ENCODE measurements at regions of chr14 and their contacts with region 1.

Region 1: DNA sequence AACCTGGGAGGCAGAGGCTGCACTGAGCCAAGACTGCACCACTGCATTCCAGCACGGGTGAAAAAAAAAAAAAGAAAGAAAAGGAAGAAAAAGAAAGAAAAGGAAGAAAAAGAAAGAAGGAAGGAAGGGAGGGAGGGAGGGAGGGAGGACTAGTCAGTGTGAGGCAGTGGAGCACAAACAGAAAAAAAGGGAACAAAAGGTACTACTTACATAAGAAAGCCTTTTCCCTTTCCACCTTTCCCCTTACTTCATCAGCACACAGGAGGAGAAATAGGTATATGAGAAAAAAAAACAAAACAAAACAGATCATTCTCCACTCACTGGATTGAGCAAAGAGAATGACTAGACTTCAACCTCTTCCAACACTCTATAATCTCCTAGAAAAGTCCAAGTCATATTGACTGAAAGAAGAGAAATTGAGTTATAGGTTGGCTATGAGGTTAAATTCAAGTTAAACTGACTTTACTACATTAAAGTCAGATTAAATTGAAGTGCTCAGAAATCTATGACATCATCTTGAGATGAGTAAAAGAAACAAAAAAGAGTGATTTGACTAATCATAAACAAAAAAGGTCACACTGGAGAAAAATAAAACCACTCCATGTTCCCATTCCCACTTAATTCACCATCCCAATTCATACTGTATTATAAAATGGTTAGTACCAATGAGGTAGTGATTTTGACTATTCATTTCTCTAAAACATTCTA is 43.6 kb downstream of the NOVA1 start:
- DNase-seq: no peak
- H3K4me3 ChIP-seq: no peak overlapping the region
- H3K27ac ChIP-seq: no peak overlapping the region
- H3K4me1 ChIP-seq: no peaks in the 10 kb centered on the region
- H3K27me3 ChIP-seq: no peaks in the 10 kb centered on the region
- CTCF ChIP-seq: no peak

Region 2: GRCh38 chr14:26500028-26500427 is 54.2 kb before region 1 on chr14:
- intact Hi-C with region 1: loop called (anchors 2 kb)
- DNase-seq: no peak
- H3K4me3 ChIP-seq: no peak overlapping the region
- H3K27ac ChIP-seq: no peak overlapping the region
- H3K4me1 ChIP-seq: no peaks in the 10 kb centered on the region
- H3K27me3 ChIP-seq: no peaks in the 10 kb centered on the region
- CTCF ChIP-seq: no peak

Region 3: DNA sequence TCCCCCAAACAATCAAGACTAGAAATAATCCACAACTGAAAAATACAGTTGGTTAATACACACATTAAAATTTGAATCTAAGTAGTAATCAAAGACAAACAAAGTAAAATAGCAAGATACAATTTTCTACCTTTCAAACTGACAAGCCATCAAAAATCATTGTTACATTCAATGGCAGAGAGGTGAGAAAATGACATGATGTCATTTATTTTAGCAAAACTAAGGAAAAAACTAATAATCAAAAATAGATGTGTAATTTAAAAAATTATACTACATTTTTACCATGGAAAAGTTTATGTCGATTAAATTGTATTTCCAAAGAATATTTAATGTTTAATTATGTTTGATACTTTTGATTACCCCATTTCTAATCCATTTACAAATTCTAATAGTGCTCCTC is 16.0 kb before region 1 on chr14:
- intact Hi-C with region 1: no loop called
- DNase-seq: no peak
- H3K4me3 ChIP-seq: no peak overlapping the region
- H3K27ac ChIP-seq: no peak overlapping the region
- H3K4me1 ChIP-seq: no peaks in the 10 kb centered on the region
- H3K27me3 ChIP-seq: no peaks in the 10 kb centered on the region
- CTCF ChIP-seq: no peak

Measured in ascending aorta (tissue), 2 donors.